ENCODE measurements at regions of chr1 and their contacts with region 1.

Region 1: DNA sequence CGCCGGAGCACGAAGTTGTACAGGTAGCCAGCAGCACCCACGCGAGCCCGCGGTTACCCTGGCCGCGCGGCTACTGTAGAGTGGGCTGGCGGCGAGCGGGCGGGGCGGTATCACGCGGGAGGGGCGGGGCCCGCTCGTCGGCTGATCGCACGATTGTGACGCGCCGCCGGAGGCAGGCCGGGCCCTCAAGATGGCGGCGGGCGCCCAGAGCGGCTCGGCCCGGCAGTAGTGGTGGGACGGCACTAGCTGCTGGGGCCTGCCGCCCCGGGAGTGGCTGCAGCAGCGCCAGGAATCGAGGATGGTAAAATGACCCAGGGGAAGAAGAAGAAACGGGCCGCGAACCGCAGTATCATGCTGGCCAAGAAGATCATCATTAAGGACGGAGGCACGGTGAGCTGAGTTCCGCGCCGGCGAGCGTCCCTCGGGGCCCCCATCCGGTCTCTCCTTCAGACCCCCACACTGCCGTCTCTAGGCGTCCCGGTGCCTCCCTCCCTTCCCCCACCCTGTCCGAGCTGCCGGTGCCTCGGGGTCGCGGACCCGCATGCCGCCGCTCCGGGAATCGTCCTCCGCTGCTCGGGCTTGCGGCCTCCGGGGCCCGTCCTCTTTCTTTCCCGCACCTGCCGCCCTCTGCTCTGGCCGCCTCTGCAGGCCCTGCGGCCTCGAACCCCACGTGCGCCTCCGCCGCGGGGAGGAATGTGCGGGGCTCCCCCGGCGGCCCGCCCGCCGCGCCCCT is 68.3 kb downstream of the SLC35A3 start:
- DNase-seq: peak; percentile 88 to 90 (median 89)
- H3K4me3 ChIP-seq: peak overlapping the region; percentile 43 to 75
- H3K4me3 Mint-ChIP-seq: peak overlapping the region; percentile 91 to 100 (median 98)
- H3K27ac ChIP-seq: peak overlapping the region; percentile 99
- H3K27ac Mint-ChIP-seq: peak overlapping the region; percentile 98 to 100 (median 99)
- H3K4me1 ChIP-seq: peaks cover 50% of the 10 kb centered on the region
- H3K4me1 Mint-ChIP-seq: peaks cover 33 to 66% (median 46%) of the 10 kb centered on the region in 4 donors
- H3K27me3 ChIP-seq: no peaks in the 10 kb centered on the region
- H3K27me3 Mint-ChIP-seq: no peaks in the 10 kb centered on the region

Region 2: GRCh38 chr1:99717005-99717404 is 321.1 kb before region 1 on chr1:
- CTCF ChIA-PET with region 1: no interaction called
- POLR2A ChIA-PET with region 1: no interaction called
- intact Hi-C with region 1: no loop called
- DNase-seq: no peak
- H3K4me3 ChIP-seq: no peak overlapping the region
- H3K4me3 Mint-ChIP-seq: no peak overlapping the region
- H3K27ac ChIP-seq: no peak overlapping the region
- H3K27ac Mint-ChIP-seq: no peak overlapping the region
- H3K4me1 ChIP-seq: no peaks in the 10 kb centered on the region
- H3K4me1 Mint-ChIP-seq: no peaks in the 10 kb centered on the region
- H3K27me3 ChIP-seq: no peaks in the 10 kb centered on the region
- H3K27me3 Mint-ChIP-seq: peaks cover 0 to 2% of the 10 kb centered on the region in 2 donors

Region 3: DNA sequence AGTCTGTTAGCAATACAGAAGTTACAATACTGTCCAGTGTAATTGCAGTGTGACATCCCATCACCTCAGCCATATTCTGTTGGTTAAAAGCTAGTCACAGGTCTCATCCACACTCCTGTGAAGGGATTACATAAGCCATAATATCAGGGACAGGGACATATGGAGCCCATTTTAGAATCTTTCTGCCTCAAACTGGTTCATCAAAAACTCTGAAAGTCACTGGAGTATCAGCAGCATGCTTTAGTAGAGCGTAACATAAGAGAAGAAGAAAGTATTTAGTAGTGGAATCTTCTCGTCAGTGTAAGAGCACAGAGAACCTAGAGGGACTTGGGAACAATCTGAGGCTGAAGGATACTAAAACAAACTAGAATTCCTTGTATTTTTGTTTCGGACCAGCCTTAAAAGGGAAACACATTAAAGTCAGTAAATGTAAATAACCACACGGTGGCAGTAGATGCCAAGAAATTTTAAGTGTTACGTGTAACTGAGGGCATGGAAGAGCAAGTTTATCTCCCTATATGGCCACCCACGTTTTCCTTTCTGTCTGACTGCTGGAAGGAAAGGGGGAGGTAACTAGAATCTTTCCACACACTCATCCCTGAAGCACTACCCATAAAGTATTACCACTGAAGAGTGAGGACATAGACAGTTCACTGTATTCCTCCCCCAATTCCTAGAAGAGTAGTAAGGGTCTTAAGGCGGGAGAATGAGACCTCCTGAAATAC is 229.5 kb before region 1 on chr1:
- CTCF ChIA-PET with region 1: interaction called, 3 read pairs
- POLR2A ChIA-PET with region 1: no interaction called
- intact Hi-C with region 1: loop called (anchors 1 kb)
- DNase-seq: peak; percentile 43 to 60 (median 57)
- H3K4me3 ChIP-seq: no peak overlapping the region
- H3K4me3 Mint-ChIP-seq: peak overlapping the region in 1 of 8 donors; percentile 4
- H3K27ac ChIP-seq: no peak overlapping the region
- H3K27ac Mint-ChIP-seq: peak overlapping the region in 1 of 7 donors; percentile 13
- H3K4me1 ChIP-seq: no peaks in the 10 kb centered on the region
- H3K4me1 Mint-ChIP-seq: peaks cover 0 to 6% (median 3%) of the 10 kb centered on the region in 4 donors
- H3K27me3 ChIP-seq: no peaks in the 10 kb centered on the region
- H3K27me3 Mint-ChIP-seq: peaks cover 10 to 13% of the 10 kb centered on the region in 2 donors

Region 4: DNA sequence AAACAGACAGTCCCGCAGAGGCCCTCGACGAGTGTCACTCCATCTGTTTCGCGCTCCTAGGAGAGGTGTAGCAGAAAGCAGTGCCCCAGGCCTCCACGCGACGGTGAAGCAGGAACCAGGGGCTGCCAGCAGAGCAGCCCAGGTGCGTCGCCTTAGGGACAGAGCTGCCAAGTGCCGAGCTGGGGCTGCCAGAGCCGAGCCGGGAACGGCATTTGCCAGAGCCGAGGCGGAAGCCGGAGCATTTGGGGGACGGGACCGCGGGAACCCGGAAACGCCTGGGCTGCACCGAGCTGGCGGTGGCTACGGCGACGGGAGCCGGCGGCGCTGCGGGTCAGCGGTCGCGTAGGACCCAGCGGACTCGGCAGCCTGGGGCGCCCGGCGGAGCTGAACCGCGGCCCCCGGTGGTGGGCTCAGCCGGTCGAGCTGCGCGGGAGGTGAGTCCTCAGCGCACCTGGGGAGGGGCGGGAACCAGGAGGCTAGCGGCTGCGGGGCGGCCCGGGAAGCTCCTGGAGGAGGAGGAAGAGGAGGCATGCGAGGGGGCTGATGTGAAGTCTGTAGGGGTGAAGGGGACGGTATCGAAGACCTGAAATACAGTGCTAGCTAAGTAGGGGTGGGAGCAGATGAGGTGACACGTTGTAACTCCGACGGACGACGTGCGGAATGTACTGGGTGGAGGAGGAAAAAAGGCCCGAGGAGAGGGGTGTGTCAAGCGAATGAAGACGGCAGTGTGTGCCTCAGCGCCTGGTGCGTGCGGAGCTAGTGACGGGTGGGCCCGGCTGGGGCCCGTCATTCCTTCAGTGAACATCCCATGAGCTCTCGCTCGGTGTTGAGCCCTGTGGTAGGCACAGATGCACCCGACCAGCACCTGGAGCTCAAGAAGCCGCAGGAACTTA is 68.1 kb before region 1 on chr1 and contains the start of gene SLC35A3:
- CTCF ChIA-PET with region 1: interaction called, 8 read pairs
- POLR2A ChIA-PET with region 1: interaction called, 41 read pairs
- intact Hi-C with region 1: loop called (anchors 1 kb)
- DNase-seq: peak; percentile 75 to 82 (median 78)
- H3K4me3 ChIP-seq: peak within 1 kb of the TSS; percentile 31 to 74
- H3K4me3 Mint-ChIP-seq: peak within 1 kb of the TSS; percentile 99 to 100 (median 100)
- H3K27ac ChIP-seq: peak within 1 kb of the TSS; percentile 75
- H3K27ac Mint-ChIP-seq: peak within 1 kb of the TSS; percentile 91 to 100 (median 98)
- H3K4me1 ChIP-seq: peaks cover 34% of the 10 kb centered on the region
- H3K4me1 Mint-ChIP-seq: peaks cover 16 to 47% (median 32%) of the 10 kb centered on the region in 4 donors
- H3K27me3 ChIP-seq: no peaks in the 10 kb centered on the region
- H3K27me3 Mint-ChIP-seq: no peaks in the 10 kb centered on the region
- total RNA-seq, gene SLC35A3: 26.6 to 31.5 TPM

Region 5: DNA sequence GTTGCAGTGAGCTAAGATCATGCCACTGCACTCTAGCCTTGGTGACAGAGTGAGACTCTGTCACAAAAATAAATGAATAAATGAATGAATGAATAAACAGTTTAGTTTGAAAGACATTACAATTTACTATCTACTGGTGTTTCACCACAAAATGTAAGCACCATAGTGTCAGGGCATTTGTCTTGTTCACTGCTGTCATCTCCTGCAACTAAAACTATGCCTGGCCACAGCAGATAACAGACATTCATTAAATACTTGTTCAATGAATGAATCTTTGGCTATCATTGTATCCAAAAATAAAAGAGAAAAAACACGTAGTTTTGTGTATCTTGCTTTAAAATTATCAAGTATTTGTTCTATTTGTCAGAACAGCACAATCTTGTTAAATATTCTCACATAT is 62.1 kb after region 1 on chr1:
- CTCF ChIA-PET with region 1: no interaction called
- POLR2A ChIA-PET with region 1: no interaction called
- intact Hi-C with region 1: no loop called
- DNase-seq: no peak
- H3K4me3 ChIP-seq: no peak overlapping the region
- H3K4me3 Mint-ChIP-seq: no peak overlapping the region
- H3K27ac ChIP-seq: no peak overlapping the region
- H3K27ac Mint-ChIP-seq: no peak overlapping the region
- H3K4me1 ChIP-seq: no peaks in the 10 kb centered on the region
- H3K4me1 Mint-ChIP-seq: no peaks in the 10 kb centered on the region
- H3K27me3 ChIP-seq: no peaks in the 10 kb centered on the region
- H3K27me3 Mint-ChIP-seq: no peaks in the 10 kb centered on the region

Region 6: DNA sequence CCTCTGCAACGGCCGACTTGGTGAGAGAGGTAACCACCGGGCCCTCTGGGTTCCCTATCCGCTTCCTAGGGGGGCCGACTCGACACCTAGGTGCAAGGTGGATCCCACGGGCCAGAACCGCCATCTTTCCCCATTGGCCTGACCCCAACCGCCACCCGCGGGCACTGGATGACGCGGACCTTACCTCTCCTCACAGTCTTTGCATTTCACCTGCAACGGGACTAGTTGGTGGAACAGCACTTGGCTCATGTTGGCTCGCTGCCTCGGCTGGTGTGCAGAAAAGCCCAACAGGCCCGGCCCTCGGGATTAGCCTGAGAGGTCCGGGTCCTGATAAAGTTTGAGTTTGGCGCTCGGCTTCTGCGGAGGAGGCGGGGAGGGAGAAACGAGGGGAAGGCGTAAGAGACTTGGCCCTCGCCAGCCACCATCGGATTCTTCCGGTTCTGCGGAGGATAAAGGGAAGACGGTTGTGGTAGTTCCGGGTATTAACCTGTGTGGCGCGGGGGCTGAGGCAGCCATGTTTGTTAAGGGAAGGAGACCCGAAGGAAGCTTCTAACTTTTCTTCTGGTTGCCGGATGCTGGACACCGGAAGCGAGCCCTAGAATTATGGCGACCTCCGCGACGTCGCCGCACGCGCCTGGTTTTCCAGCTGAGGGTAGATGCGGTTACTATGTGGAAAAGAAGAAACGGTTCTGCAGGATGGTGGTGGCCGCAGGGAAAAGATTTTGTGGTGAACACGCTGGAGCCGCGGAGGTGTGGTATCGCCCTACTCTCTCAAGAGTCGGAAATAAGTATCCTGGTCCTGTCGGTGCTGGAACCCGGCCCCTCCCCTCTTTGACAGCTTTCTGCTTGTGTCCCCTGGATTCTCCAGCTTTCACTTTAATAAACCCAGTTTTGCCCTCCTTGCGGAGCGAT is 94.7 kb after region 1 on chr1 and contains the starts of genes SASS6 and TRMT13:
- CTCF ChIA-PET with region 1: no interaction called
- POLR2A ChIA-PET with region 1: interaction called, 13 read pairs
- intact Hi-C with region 1: loop called (anchors 1 kb)
- DNase-seq: peak; percentile 93 to 97 (median 95)
- H3K4me3 ChIP-seq: peak within 1 kb of the TSS; percentile 84 to 99
- H3K4me3 Mint-ChIP-seq: peak within 1 kb of the TSS; percentile 96 to 99 (median 99)
- H3K27ac ChIP-seq: peak within 1 kb of the TSS; percentile 59
- H3K27ac Mint-ChIP-seq: peak within 1 kb of the TSS; percentile 94 to 99 (median 97)
- H3K4me1 ChIP-seq: peaks cover 29% of the 10 kb centered on the region
- H3K4me1 Mint-ChIP-seq: peaks cover 23 to 39% (median 32%) of the 10 kb centered on the region in 4 donors
- H3K27me3 ChIP-seq: no peaks in the 10 kb centered on the region
- H3K27me3 Mint-ChIP-seq: no peaks in the 10 kb centered on the region
- total RNA-seq, gene SASS6: 5.6 to 5.8 TPM
- total RNA-seq, gene TRMT13: 45.8 to 45.9 TPM

Region 7: DNA sequence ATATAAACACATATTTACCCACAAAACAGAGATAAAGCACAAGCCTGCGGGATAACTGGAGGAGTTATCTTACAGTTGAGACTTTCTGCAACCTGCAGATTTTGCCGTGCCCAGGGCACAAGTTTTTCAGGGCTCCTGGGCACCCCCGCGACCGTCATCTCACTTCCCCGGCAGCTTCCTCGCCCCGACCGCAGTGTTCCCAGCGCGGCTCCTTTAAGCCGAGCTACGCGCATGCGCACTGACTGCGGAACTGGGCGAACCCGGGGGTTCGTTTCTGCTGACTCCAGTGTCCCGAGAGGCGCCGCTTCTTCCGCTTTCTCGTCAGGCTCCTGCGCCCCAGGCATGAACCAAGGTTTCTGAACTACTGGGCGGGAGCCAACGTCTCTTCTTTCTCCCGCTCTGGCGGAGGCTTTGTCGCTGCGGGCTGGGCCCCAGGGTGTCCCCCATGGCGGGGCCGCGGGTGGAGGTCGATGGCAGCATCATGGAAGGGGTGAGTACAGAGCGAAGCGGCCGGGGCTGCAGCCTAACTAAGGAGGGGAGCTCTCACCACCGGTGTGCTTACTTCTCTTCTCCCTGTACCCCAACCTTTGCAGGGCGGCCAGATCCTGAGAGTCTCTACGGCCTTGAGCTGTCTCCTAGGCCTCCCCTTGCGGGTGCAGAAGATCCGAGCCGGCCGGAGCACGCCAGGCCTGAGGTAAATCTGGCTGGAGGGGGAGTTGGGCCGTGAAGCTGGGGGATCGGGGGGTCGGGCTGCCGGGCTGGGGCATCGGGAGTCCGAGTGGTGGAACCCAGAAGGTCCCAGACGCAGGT is 228.0 kb after region 1 on chr1 and contains the start of gene RTCA:
- CTCF ChIA-PET with region 1: no interaction called
- POLR2A ChIA-PET with region 1: interaction called, 6 read pairs
- intact Hi-C with region 1: loop called (anchors 5 kb)
- DNase-seq: peak; percentile 93 to 97 (median 94)
- H3K4me3 ChIP-seq: peak within 1 kb of the TSS; percentile 77
- H3K4me3 Mint-ChIP-seq: peak within 1 kb of the TSS; percentile 99 to 100 (median 100)
- H3K27ac ChIP-seq: peak within 1 kb of the TSS; percentile 78
- H3K27ac Mint-ChIP-seq: peak within 1 kb of the TSS; percentile 96 to 99 (median 98)
- H3K4me1 ChIP-seq: peaks cover 44% of the 10 kb centered on the region
- H3K4me1 Mint-ChIP-seq: peaks cover 19 to 58% (median 39%) of the 10 kb centered on the region in 4 donors
- H3K27me3 ChIP-seq: no peaks in the 10 kb centered on the region
- H3K27me3 Mint-ChIP-seq: no peaks in the 10 kb centered on the region
- total RNA-seq, gene RTCA: 39.7 to 41.4 TPM

Region 8: GRCh38 chr1:101257500-101258325 is 1219.6 kb after region 1 on chr1:
- CTCF ChIA-PET with region 1: no interaction called
- POLR2A ChIA-PET with region 1: no interaction called
- intact Hi-C with region 1: loop called (anchors 10 kb)
- DNase-seq: peak; percentile 48 to 68 (median 56)
- H3K4me3 ChIP-seq: no peak overlapping the region
- H3K4me3 Mint-ChIP-seq: peak overlapping the region; percentile 26 to 78 (median 70)
- H3K27ac ChIP-seq: peak overlapping the region; percentile 8
- H3K27ac Mint-ChIP-seq: peak overlapping the region; percentile 73 to 92 (median 88)
- H3K4me1 ChIP-seq: peaks cover 58% of the 10 kb centered on the region
- H3K4me1 Mint-ChIP-seq: peaks cover 54 to 72% (median 65%) of the 10 kb centered on the region in 4 donors
- H3K27me3 ChIP-seq: no peaks in the 10 kb centered on the region
- H3K27me3 Mint-ChIP-seq: no peaks in the 10 kb centered on the region